Natural killer cell (primary cell): ENCODE measurements at regions of chr5 and their contacts with region 1.

Region 1: DNA sequence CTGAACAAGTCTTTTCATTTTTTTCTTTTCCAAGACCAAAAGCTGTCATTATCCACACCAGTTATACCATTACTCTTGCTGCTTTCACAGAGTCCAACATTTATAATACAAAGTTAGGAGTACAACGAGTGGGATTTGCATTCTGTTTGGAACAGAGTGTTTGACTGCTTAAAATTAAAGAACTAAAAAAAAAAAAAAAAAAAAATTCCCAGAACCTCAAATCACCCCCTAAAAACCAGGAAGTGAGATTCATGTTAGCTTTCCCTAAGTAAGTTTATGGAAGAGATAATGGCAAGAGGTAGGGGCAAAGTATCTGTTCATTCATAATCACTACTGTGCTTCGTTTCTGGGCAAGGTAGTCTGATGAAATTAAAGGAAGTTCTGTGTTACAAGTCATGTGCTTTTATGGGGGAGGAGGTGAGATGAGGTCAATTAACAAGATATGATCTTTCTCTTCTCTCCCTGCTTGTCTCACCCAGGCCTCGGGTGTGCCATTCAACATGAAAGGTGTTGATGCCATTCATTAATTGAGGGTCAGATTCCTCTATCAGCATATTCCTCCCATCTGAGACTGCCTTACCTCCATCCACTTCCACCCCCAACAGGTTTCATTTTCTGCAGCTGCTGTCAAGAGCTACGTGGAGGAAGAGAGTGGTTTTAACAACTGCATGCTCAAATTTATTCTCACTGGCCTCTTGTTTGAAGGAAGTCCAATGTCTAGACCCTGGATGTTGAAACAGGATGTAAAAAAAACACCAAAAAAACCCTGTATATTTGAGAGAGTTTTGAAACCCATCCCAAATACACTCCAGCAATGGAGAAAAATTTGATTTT is 58.1 kb downstream of the MARCHF3 start:
- DNase-seq: peak; percentile 52 to 68
- ATAC-seq: peak; percentile 84 to 94 (median 93)
- H3K4me3 ChIP-seq: peak overlapping the region; percentile 9
- H3K4me3 Mint-ChIP-seq: peak overlapping the region; percentile 85
- H3K27ac ChIP-seq: peak overlapping the region; percentile 85
- H3K27ac Mint-ChIP-seq: peak overlapping the region; percentile 92 to 99
- H3K4me1 ChIP-seq: peaks cover 10% of the 10 kb centered on the region
- H3K4me1 Mint-ChIP-seq: peaks cover 47 to 51% of the 10 kb centered on the region in 2 donors
- H3K27me3 ChIP-seq: no peaks in the 10 kb centered on the region
- H3K27me3 Mint-ChIP-seq: no peaks in the 10 kb centered on the region
- CTCF ChIP-seq: no peak

Region 2: GRCh38 chr5:126816649-126817048 is 155.6 kb before region 1 on chr5:
- intact Hi-C with region 1: loop called (anchors 1 kb)
- DNase-seq: peak; percentile 38 to 49
- ATAC-seq: peak; percentile 61 to 81 (median 78)
- H3K4me3 ChIP-seq: no peak overlapping the region
- H3K4me3 Mint-ChIP-seq: peak overlapping the region; percentile 76
- H3K27ac ChIP-seq: no peak overlapping the region
- H3K27ac Mint-ChIP-seq: peak overlapping the region; percentile 91 to 98
- H3K4me1 ChIP-seq: peaks cover 9% of the 10 kb centered on the region
- H3K4me1 Mint-ChIP-seq: peaks cover 26 to 31% of the 10 kb centered on the region in 2 donors
- H3K27me3 ChIP-seq: no peaks in the 10 kb centered on the region
- H3K27me3 Mint-ChIP-seq: no peaks in the 10 kb centered on the region
- CTCF ChIP-seq: no peak